ENCODE measurements at regions of chr15 and their contacts with region 1.

Region 1: DNA sequence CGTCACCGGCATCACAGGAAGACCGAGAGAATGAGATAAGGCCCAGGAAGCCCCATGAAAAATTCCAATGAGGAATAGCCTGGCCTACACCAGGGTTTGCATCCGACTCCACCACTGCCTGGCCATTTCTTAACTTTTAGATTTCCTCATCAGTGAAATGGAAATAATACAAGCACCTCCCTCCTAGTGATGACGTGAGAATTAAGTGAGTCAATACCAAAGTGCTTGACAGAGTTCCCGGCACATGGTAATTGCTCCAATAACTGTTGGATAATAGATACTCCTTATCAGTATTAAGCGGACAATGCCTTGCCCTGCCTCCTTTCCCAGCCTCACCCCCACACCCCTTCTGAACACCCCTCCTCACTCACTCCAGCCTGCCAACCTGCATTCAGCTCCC is 105.4 kb downstream of the TLE3 start:
- DNase-seq: no peak
- H3K4me3 ChIP-seq: no peak overlapping the region
- H3K27ac ChIP-seq: no peak overlapping the region
- H3K4me1 ChIP-seq: no peaks in the 10 kb centered on the region
- H3K27me3 ChIP-seq: no peaks in the 10 kb centered on the region

Region 2: GRCh38 chr15:69958494-69959084 is 33.8 kb before region 1 on chr15:
- CTCF ChIA-PET with region 1: no interaction called
- POLR2A ChIA-PET with region 1: interaction called, 10 read pairs
- DNase-seq: peak in 2 of 3 donors; percentile 9 to 13
- H3K4me3 ChIP-seq: no peak overlapping the region
- H3K27ac ChIP-seq: no peak overlapping the region
- H3K4me1 ChIP-seq: no peaks in the 10 kb centered on the region
- H3K27me3 ChIP-seq: peaks cover 0 to 4% (median 0%) of the 10 kb centered on the region in 5 experiments

Measured in common myeloid progenitor, CD34-positive (primary cell).